Caco-2 (cell line): ENCODE measurements at regions of chr17 and their contacts with region 1.

Region 1: DNA sequence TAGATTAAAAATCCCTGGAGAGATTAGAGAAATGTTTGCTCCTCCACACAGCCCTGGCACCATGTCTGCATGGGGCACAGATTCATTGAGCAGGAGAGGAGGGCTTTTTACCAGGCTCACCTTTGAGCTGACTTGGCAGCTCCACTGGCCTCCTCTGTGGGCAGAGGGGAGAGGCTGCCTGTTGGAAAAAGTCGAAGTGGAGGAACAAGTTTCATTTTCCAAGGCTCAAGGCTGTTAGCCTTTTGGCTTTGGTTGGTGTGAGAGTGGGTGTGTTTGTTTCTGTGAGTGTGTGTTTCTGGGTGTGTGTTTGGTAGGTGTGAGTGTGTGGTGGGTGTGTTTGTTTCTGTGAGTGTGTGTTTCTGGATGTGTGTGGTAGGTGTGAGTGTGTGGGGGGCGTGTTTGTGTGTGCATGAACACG is 5.6 kb downstream of the TMEM238L start:
- DNase-seq: no peak
- H3K4me3 ChIP-seq: no peak overlapping the region
- H3K4me3 Mint-ChIP-seq: no peak overlapping the region
- H3K27ac Mint-ChIP-seq: no peak overlapping the region
- H3K4me1 ChIP-seq: peaks cover 11% of the 10 kb centered on the region
- H3K4me1 Mint-ChIP-seq: peaks cover 6% of the 10 kb centered on the region
- H3K27me3 ChIP-seq: no peaks in the 10 kb centered on the region
- H3K27me3 Mint-ChIP-seq: no peaks in the 10 kb centered on the region
- CTCF ChIP-seq: no peak

Region 2: GRCh38 chr17:10737168-10737622 is 61.1 kb before region 1 on chr17:
- CTCF ChIA-PET with region 1: no interaction called
- POLR2A ChIA-PET with region 1: no interaction called
- intact Hi-C with region 1: loop called (anchors 5 kb)
- DNase-seq: peak; percentile 41 to 50
- H3K4me3 ChIP-seq: no peak overlapping the region
- H3K4me3 Mint-ChIP-seq: no peak overlapping the region
- H3K27ac Mint-ChIP-seq: no peak overlapping the region
- H3K4me1 ChIP-seq: 0 out of 2 replicates have a peak, but pooled peaks cover 5% of the 10 kb centered on the region
- H3K4me1 Mint-ChIP-seq: peaks cover 6% of the 10 kb centered on the region
- H3K27me3 ChIP-seq: no peaks in the 10 kb centered on the region
- H3K27me3 Mint-ChIP-seq: no peaks in the 10 kb centered on the region
- CTCF ChIP-seq: peak; percentile 45 to 55

Region 3: DNA sequence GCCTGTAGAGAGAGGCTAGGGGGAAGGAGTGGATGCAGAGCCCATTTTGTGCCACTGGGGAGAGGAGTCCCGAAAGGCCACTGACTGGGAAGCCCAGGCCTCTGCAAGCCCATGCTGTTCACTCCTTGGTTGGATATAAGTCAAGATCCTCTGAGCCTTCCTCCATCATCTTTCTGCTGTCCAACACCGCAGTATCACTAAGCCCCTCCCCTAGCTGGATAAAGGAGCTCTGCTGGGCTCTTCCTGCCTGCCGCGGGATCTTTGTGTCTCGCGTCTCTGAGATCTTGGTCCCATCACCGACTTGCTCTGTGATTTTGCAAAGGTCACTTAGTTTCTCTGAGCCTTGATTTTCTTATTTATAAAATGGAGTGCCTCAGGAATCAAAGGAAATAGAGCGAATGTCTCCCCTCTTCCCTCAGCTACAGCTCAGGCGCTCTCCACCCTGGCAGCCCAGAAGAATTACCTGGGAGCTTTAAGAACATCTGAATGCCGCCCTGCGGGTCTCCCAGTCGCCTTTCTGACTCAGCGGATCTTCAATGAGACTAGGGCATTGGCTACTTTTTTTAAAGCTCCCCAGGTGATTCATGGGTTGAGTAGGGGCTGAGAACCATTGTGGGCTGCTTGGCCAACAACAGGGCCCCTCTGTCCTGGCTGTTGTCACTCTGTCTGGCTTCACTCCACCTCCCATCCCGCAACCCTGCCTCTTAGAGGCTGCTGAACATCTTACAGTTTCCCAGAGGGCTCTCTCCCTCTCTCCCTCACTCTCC is 43.3 kb before region 1 on chr17:
- CTCF ChIA-PET with region 1: no interaction called
- POLR2A ChIA-PET with region 1: no interaction called
- intact Hi-C with region 1: loop called (anchors 5 kb)
- DNase-seq: no peak
- H3K4me3 ChIP-seq: no peak overlapping the region
- H3K4me3 Mint-ChIP-seq: no peak overlapping the region
- H3K27ac Mint-ChIP-seq: no peak overlapping the region
- H3K4me1 ChIP-seq: 0 out of 2 replicates have a peak, but pooled peaks cover 6% of the 10 kb centered on the region
- H3K4me1 Mint-ChIP-seq: peaks cover 8% of the 10 kb centered on the region
- H3K27me3 ChIP-seq: no peaks in the 10 kb centered on the region
- H3K27me3 Mint-ChIP-seq: no peaks in the 10 kb centered on the region
- CTCF ChIP-seq: no peak

Region 4: GRCh38 chr17:10812674-10813073 is 14.3 kb after region 1 on chr17:
- CTCF ChIA-PET with region 1: no interaction called
- POLR2A ChIA-PET with region 1: no interaction called
- intact Hi-C with region 1: no loop called
- DNase-seq: no peak
- H3K4me3 ChIP-seq: no peak overlapping the region
- H3K4me3 Mint-ChIP-seq: no peak overlapping the region
- H3K27ac Mint-ChIP-seq: no peak overlapping the region
- H3K4me1 ChIP-seq: no peaks in the 10 kb centered on the region
- H3K4me1 Mint-ChIP-seq: no peaks in the 10 kb centered on the region
- H3K27me3 ChIP-seq: no peaks in the 10 kb centered on the region
- H3K27me3 Mint-ChIP-seq: no peaks in the 10 kb centered on the region
- CTCF ChIP-seq: no peak